Naive thymus-derived CD4-positive, alpha-beta T cell (primary cell): ENCODE measurements at regions of chr6 and their contacts with region 1.

Region 1: DNA sequence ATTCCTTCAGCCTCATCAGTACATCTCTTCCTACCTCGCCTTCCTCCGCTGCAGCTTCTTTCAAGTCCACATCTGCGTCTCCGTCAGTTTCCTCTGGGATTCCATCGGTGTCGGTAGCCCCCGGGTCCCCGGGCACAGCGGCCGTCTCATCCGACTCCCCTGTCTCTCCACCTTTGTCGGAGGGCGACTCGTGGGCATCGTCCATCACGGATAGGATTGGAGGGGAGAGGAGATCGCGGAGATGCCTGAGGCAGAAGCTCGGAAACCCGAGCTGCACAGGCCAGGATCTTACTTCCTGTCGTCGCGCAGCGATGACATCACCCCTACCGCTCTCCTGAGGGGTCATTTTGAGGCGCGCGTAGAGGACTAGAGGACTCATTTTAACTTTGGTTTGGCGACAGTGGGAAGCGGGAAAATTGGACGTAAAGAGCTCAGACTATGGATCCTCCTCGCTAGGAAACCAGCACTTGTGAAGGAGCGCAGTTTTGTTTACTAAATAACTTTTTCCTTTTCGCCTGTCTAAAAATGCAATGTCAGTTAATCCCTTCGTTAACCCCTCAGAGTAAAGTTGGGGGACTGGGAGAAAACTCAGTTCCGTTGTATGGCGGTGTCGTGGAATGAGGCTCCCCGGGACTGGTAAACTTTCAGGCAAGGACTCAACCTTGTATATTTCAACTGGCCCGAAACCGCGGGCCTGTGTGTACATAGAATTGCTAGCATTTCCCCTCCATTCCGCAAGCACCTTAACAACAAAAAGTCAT is at the start of gene TAF11:
- DNase-seq: peak; percentile 73 to 91 (median 88)
- ATAC-seq: peak; percentile 80
- H3K4me3 ChIP-seq: peak within 1 kb of the TSS; percentile 94
- H3K4me3 Mint-ChIP-seq: peak within 1 kb of the TSS; percentile 92 to 100 (median 100)
- H3K27ac ChIP-seq: peak within 1 kb of the TSS; percentile 95
- H3K27ac Mint-ChIP-seq: peak within 1 kb of the TSS; percentile 99 to 100 (median 100)
- H3K4me1 ChIP-seq: peaks cover 15 to 18% of the 10 kb centered on the region in 2 donors
- H3K4me1 Mint-ChIP-seq: peaks cover 41 to 71% (median 58%) of the 10 kb centered on the region in 7 donors
- H3K27me3 ChIP-seq: no peaks in the 10 kb centered on the region
- H3K27me3 Mint-ChIP-seq: peaks cover 0 to 16% (median 0%) of the 10 kb centered on the region in 5 donors
- total RNA-seq, gene TAF11: 25.4 to 35.1 (median 29.4) TPM

Region 2: GRCh38 chr6:34526992-34527728 is 360.8 kb before region 1 on chr6:
- CTCF ChIA-PET with region 1: no interaction called
- POLR2A ChIA-PET with region 1: interaction called, 6 read pairs
- intact Hi-C with region 1: loop called in 1 of 2 experiments (anchors 2 kb)
- DNase-seq: peak; percentile 88 to 96 (median 94)
- ATAC-seq: peak; percentile 100
- H3K4me3 ChIP-seq: peak overlapping the region; percentile 33
- H3K4me3 Mint-ChIP-seq: peak overlapping the region; percentile 20 to 69 (median 46)
- H3K27ac ChIP-seq: peak overlapping the region; percentile 70
- H3K27ac Mint-ChIP-seq: peak overlapping the region; percentile 12 to 89 (median 72)
- H3K4me1 ChIP-seq: peaks cover 7 to 14% of the 10 kb centered on the region in 2 donors
- H3K4me1 Mint-ChIP-seq: peaks cover 4 to 12% (median 8%) of the 10 kb centered on the region in 7 donors
- H3K27me3 ChIP-seq: no peaks in the 10 kb centered on the region
- H3K27me3 Mint-ChIP-seq: peaks cover 0 to 2% (median 0%) of the 10 kb centered on the region in 5 donors

Region 3: DNA sequence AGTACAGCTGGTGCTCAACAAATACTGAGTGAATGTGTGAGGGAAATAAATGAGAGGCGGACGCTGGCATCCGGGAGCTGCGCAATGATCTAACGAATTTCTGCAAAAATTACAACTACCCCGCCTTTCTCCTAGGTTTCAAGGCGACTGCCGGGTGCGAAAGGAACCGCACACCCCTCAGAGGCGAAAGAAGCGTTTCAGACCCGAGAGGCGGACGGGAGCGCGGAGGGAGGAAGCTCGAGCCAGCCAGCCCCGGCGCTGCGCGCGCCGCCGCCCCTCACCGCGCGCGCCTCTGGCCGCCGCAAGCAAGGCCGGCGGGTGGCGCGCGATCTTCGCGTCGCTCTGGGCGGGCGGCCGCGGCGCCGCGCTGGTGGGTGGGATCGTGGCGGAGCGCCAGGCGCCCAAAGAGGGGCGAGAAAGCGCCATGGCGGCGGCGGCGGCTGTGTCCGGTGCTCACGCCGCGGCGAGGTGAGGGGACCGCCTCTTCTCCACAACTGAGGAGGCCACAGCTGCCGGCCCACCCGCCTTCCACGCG is 96.2 kb before region 1 on chr6 and contains the start of gene BLTP3A:
- CTCF ChIA-PET with region 1: interaction called, 6 read pairs
- POLR2A ChIA-PET with region 1: interaction called, 21 read pairs
- intact Hi-C with region 1: loop called (anchors 1 to 2 kb)
- DNase-seq: peak; percentile 60 to 85 (median 73)
- ATAC-seq: peak; percentile 97
- H3K4me3 ChIP-seq: peak within 1 kb of the TSS; percentile 100
- H3K4me3 Mint-ChIP-seq: peak within 1 kb of the TSS; percentile 92 to 100 (median 98)
- H3K27ac ChIP-seq: peak within 1 kb of the TSS; percentile 79
- H3K27ac Mint-ChIP-seq: peak within 1 kb of the TSS; percentile 88 to 97 (median 96)
- H3K4me1 ChIP-seq: peaks cover 8 to 15% of the 10 kb centered on the region in 2 donors
- H3K4me1 Mint-ChIP-seq: peaks cover 24 to 38% (median 30%) of the 10 kb centered on the region in 7 donors
- H3K27me3 ChIP-seq: no peaks in the 10 kb centered on the region
- H3K27me3 Mint-ChIP-seq: no peaks in the 10 kb centered on the region
- total RNA-seq, gene BLTP3A: 10.7 to 12.9 (median 11.9) TPM

Region 4: DNA sequence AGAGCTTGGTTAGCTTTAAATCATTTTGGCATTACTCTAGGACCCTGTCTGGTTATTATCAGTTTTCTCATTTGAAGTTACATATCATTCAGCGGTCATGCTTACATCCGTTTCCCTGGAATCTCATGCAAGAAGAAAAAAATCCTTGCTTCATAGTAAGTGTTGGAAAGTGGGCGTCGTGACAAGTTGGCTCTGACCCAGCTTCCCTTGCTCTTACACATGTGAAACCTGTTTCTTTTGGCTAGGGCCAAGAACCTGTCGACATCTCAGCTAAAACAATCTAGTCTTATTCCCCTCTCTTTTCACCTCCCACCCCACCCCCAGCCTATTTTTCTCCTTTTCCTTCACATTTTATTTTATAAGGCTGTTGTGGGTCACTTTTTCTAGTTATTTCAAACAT is 46.6 kb after region 1 on chr6:
- CTCF ChIA-PET with region 1: no interaction called
- POLR2A ChIA-PET with region 1: no interaction called
- intact Hi-C with region 1: no loop called
- DNase-seq: no peak
- ATAC-seq: no peak
- H3K4me3 ChIP-seq: no peak overlapping the region
- H3K4me3 Mint-ChIP-seq: no peak overlapping the region
- H3K27ac ChIP-seq: no peak overlapping the region
- H3K27ac Mint-ChIP-seq: no peak overlapping the region
- H3K4me1 ChIP-seq: no peaks in the 10 kb centered on the region
- H3K4me1 Mint-ChIP-seq: peaks cover 0 to 21% (median 6%) of the 10 kb centered on the region in 7 donors
- H3K27me3 ChIP-seq: no peaks in the 10 kb centered on the region
- H3K27me3 Mint-ChIP-seq: no peaks in the 10 kb centered on the region

Region 5: GRCh38 chr6:34953061-34954025 is 65.4 kb after region 1 on chr6:
- CTCF ChIA-PET with region 1: no interaction called
- POLR2A ChIA-PET with region 1: no interaction called
- intact Hi-C with region 1: no loop called
- DNase-seq: no peak
- ATAC-seq: no peak
- H3K4me3 ChIP-seq: no peak overlapping the region
- H3K4me3 Mint-ChIP-seq: no peak overlapping the region
- H3K27ac ChIP-seq: no peak overlapping the region
- H3K27ac Mint-ChIP-seq: no peak overlapping the region
- H3K4me1 ChIP-seq: peaks cover 0 to 5% of the 10 kb centered on the region in 2 donors
- H3K4me1 Mint-ChIP-seq: peaks cover 6 to 33% (median 23%) of the 10 kb centered on the region in 7 donors
- H3K27me3 ChIP-seq: no peaks in the 10 kb centered on the region
- H3K27me3 Mint-ChIP-seq: no peaks in the 10 kb centered on the region

Region 6: GRCh38 chr6:34986845-34987246 is 98.9 kb after region 1 on chr6:
- CTCF ChIA-PET with region 1: interaction called, 4 read pairs
- POLR2A ChIA-PET with region 1: no interaction called
- intact Hi-C with region 1: loop called in 1 of 2 experiments (anchors 5 kb)
- DNase-seq: peak; percentile 23 to 72 (median 59)
- ATAC-seq: peak; percentile 72
- H3K4me3 ChIP-seq: no peak overlapping the region
- H3K4me3 Mint-ChIP-seq: no peak overlapping the region
- H3K27ac ChIP-seq: no peak overlapping the region
- H3K27ac Mint-ChIP-seq: no peak overlapping the region
- H3K4me1 ChIP-seq: no peaks in the 10 kb centered on the region
- H3K4me1 Mint-ChIP-seq: no peaks in the 10 kb centered on the region
- H3K27me3 ChIP-seq: no peaks in the 10 kb centered on the region
- H3K27me3 Mint-ChIP-seq: no peaks in the 10 kb centered on the region

Region 7: DNA sequence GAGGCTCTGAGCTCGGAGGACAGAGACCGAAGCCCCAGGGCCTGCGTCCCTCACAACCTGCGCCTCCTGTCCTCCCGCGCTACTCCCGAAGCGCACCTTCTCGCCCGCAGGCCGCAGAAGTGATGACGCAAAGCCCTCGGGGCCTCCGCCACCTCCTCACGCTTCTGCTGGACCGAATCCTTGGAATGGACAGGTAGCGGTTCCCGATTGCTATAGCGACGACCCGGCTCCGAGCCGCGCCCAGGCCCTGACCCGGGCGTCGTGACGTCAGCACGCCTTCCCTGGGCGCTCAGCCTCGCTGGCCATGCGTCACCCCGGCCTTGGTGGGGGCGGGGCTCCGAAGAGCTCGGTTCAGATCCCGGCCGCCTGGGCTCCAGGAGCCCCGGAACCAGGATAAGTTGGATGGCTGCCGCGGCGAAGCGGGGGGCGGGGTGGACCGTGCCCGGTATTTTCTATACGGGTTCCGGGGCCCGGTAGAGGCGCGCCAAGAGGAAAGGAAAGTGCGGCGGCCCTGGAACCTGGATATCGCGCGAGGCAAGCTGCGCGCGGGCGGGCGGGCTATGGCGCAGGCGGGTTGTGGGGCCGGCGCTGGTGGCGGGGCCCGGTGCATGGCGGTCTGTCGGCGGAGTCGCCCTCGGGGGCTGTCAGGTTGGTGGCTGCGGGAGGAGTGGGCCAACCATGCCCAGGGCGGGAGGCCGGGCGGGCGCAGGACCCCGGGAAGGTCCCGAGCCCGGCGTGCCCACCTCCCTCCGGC is 371.4 kb after region 1 on chr6 and contains the start of gene ZNF76:
- CTCF ChIA-PET with region 1: no interaction called
- POLR2A ChIA-PET with region 1: no interaction called
- intact Hi-C with region 1: loop called (anchors 1 to 2 kb)
- DNase-seq: peak; percentile 89 to 93 (median 92)
- ATAC-seq: peak; percentile 88
- H3K4me3 ChIP-seq: peak within 1 kb of the TSS; percentile 65
- H3K4me3 Mint-ChIP-seq: peak within 1 kb of the TSS; percentile 85 to 99 (median 97)
- H3K27ac ChIP-seq: peak within 1 kb of the TSS; percentile 95
- H3K27ac Mint-ChIP-seq: peak within 1 kb of the TSS; percentile 89 to 99 (median 97)
- H3K4me1 ChIP-seq: peaks cover 15 to 17% of the 10 kb centered on the region in 2 donors
- H3K4me1 Mint-ChIP-seq: peaks cover 37 to 64% (median 50%) of the 10 kb centered on the region in 7 donors
- H3K27me3 ChIP-seq: no peaks in the 10 kb centered on the region
- H3K27me3 Mint-ChIP-seq: no peaks in the 10 kb centered on the region
- total RNA-seq, gene ZNF76: 44.4 to 110 (median 77.2) TPM

Region 8: DNA sequence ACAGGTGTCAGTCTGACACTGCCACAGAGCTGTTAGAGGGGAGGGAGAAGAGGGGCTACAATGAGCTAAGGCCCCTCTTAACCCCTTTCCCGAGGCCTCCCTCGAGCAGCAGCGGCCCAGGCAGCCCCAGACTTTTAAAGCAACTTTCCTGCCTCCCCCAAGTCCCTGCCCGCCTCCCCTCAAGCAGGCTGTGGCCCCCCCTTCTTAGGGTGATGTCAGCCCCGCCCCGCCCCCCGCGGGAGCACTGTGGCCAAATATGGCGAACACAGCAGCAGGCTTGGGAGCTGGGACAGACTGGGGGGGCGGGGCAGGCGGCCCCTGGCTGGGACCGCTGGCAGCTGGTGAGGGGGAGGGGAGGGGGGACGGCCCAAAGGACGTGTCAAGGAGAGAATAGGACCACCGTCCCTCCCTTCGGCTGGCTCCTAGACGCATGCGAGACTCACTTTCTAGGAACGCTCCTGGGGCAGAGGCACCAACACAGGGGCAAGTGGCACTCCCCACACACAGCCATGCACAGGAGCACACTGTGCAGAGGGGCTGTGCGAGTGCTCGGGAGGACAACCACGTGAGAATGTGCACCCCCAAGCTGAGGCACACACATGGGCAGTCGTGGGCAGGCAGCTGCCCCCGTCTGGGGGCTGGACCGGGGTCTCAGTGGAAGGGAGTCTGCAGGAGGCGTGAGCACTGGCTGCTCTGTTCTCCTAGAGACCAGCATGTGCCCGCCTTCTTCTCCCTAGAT is 602.2 kb after region 1 on chr6:
- CTCF ChIA-PET with region 1: no interaction called
- POLR2A ChIA-PET with region 1: no interaction called
- intact Hi-C with region 1: no loop called
- DNase-seq: no peak
- ATAC-seq: no peak
- H3K4me3 ChIP-seq: no peak overlapping the region
- H3K4me3 Mint-ChIP-seq: no peak overlapping the region
- H3K27ac ChIP-seq: no peak overlapping the region
- H3K27ac Mint-ChIP-seq: peak overlapping the region in 1 of 9 donors; percentile 70
- H3K4me1 ChIP-seq: no peaks in the 10 kb centered on the region
- H3K4me1 Mint-ChIP-seq: peaks cover 4 to 22% (median 15%) of the 10 kb centered on the region in 7 donors
- H3K27me3 ChIP-seq: no peaks in the 10 kb centered on the region
- H3K27me3 Mint-ChIP-seq: peaks cover 0 to 16% (median 0%) of the 10 kb centered on the region in 5 donors